ENCODE measurements at regions of chr12 and their contacts with region 1.

Region 1: GRCh38 chr12:25130741-25131188 is 64.2 kb downstream of the DNAI7 start:
- DNase-seq: peak; percentile 31
- ATAC-seq: no peak
- H3K4me3 ChIP-seq: no peak overlapping the region
- H3K27ac ChIP-seq: no peak overlapping the region
- H3K4me1 ChIP-seq: no peaks in the 10 kb centered on the region
- H3K27me3 ChIP-seq: no peaks in the 10 kb centered on the region
- CTCF ChIP-seq: no peak
- EP300 ChIP-seq: no peak
- POLR2A ChIP-seq: no peak
- RAD21 ChIP-seq: no peak

Region 2: GRCh38 chr12:24852420-24852819 is 278.3 kb before region 1 on chr12:
- CTCF ChIA-PET with region 1: no interaction called
- POLR2A ChIA-PET with region 1: no interaction called
- in situ Hi-C with region 1: no loop called
- intact Hi-C with region 1: loop called (anchors 10 kb)
- DNase-seq: no peak
- ATAC-seq: no peak
- H3K4me3 ChIP-seq: no peak overlapping the region
- H3K27ac ChIP-seq: no peak overlapping the region
- H3K4me1 ChIP-seq: no peaks in the 10 kb centered on the region
- H3K27me3 ChIP-seq: no peaks in the 10 kb centered on the region
- CTCF ChIP-seq: no peak
- EP300 ChIP-seq: no peak
- POLR2A ChIP-seq: no peak
- RAD21 ChIP-seq: no peak

Region 3: DNA sequence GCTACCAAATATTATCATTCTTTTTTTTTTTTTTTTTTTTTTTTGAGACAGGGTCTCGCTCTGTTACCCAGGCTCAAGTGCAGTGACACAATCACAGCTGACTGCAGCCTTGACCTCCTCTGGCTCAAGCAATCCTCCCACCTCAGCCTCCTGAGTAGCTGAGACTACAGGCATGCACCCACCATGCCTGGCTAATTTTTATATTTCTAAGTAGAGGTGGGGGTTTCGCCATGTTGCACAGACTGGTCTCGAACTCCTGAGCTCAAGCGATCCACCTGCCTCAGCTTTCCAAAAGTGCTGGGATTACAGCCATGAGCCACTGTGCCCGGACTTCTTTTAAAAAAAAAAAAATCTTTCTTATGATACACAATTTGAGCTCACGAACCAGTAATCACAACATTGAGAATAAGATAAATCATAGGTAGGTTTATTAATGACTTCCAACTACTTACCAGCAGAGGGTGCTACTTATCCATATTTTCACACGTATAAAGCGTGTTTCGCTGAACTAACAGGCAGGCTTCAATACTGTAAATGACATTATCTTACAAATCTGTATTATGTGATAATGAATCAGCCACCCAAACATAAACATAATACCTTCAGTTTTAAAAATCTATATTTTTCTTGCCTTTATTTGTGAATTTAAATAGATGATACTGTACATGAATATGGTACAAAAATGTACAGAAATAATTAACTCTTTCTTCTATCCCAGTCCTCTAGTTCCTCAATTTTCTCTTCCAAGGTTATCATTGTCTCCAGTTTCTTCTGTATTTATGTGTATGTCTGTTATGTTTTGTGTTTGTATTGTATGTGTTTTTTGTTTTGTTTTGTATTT is 139.3 kb before region 1 on chr12:
- CTCF ChIA-PET with region 1: interaction called, 11 read pairs
- POLR2A ChIA-PET with region 1: no interaction called
- in situ Hi-C with region 1: loop called (anchors 5 kb)
- intact Hi-C with region 1: loop called (anchors 1 kb)
- DNase-seq: peak; percentile 45
- ATAC-seq: peak; percentile 82
- H3K4me3 ChIP-seq: no peak overlapping the region
- H3K27ac ChIP-seq: no peak overlapping the region
- H3K4me1 ChIP-seq: no peaks in the 10 kb centered on the region
- H3K27me3 ChIP-seq: no peaks in the 10 kb centered on the region; a peak in 1 of 5 replicates
- CTCF ChIP-seq: peak; percentile 70
- EP300 ChIP-seq: no peak
- POLR2A ChIP-seq: no peak
- RAD21 ChIP-seq: peak; percentile 53; the same call in 1 of the 2 replicates

Region 4: GRCh38 chr12:25005376-25005775 is 125.4 kb before region 1 on chr12:
- CTCF ChIA-PET with region 1: no interaction called
- POLR2A ChIA-PET with region 1: no interaction called
- in situ Hi-C with region 1: no loop called
- intact Hi-C with region 1: no loop called
- DNase-seq: no peak
- ATAC-seq: no peak
- H3K4me3 ChIP-seq: no peak overlapping the region
- H3K27ac ChIP-seq: no peak overlapping the region
- H3K4me1 ChIP-seq: no peaks in the 10 kb centered on the region
- H3K27me3 ChIP-seq: no peaks in the 10 kb centered on the region; a peak in 1 of 5 replicates
- CTCF ChIP-seq: no peak
- EP300 ChIP-seq: no peak
- POLR2A ChIP-seq: no peak
- RAD21 ChIP-seq: no peak

Region 5: DNA sequence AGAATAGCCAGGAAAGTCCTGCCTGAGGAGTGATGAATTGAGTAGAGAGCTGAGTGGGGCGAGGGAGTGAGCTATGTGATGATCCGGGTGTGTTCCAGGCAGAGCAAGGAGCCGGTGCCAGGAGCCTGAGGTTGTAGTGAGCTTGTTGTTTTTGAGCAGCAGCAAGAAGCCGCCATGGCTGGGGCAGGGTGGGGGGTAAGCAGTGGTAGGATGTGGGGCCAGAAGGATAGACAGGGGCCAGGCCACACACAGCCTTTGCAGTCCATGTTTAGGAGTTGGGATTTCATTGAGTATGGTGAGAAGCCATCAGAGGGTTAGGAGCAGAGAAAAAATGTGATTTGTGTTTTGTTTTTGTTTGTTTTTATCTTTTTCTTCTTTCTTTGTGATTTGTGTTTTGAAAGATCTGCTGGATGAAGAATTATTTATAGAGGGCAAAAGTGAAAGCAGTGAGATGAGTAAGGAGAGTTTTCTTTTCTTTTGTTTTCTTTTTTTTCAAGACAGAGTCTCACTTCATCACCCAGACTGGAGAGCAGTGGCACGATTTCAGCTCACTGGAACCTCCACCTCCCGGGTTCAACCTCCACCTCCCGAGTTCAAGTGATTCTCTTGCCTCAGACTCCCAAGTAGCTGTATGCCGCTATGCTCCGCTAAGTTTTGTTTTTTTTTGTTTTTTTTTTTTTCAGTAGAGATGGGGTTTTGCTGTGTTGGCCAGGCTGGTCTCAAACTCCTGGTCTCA is 89.6 kb before region 1 on chr12:
- CTCF ChIA-PET with region 1: no interaction called
- POLR2A ChIA-PET with region 1: no interaction called
- in situ Hi-C with region 1: no loop called
- intact Hi-C with region 1: no loop called
- DNase-seq: no peak
- ATAC-seq: no peak
- H3K4me3 ChIP-seq: no peak overlapping the region
- H3K27ac ChIP-seq: no peak overlapping the region
- H3K4me1 ChIP-seq: no peaks in the 10 kb centered on the region
- H3K27me3 ChIP-seq: no peaks in the 10 kb centered on the region; a peak in 1 of 5 replicates
- CTCF ChIP-seq: no peak
- EP300 ChIP-seq: no peak
- POLR2A ChIP-seq: no peak
- RAD21 ChIP-seq: no peak

Region 6: DNA sequence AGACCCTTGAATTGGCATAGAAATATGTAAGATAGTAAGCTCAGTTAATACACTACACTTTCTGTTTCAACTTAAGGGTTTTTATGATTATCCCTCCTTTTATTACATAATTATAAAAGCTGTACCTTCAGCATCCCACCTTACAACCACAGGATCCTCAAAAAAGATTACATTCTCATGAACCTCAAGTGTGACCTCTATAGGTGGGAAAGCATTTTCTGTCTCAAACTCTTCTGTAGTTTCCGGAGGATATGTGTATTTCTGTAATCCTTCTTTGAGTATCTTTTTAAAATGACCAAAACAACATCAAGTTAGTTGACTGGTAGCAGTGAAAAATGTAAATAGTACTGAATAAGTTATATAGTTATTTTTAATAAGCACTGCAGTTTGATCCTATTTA is 11.7 kb before region 1 on chr12:
- CTCF ChIA-PET with region 1: no interaction called
- POLR2A ChIA-PET with region 1: no interaction called
- in situ Hi-C with region 1: no loop called
- intact Hi-C with region 1: no loop called
- DNase-seq: no peak
- ATAC-seq: no peak
- H3K4me3 ChIP-seq: no peak overlapping the region
- H3K27ac ChIP-seq: no peak overlapping the region
- H3K4me1 ChIP-seq: peaks cover 7% of the 10 kb centered on the region; the same call in 1 of the 2 replicates
- H3K27me3 ChIP-seq: no peaks in the 10 kb centered on the region
- CTCF ChIP-seq: no peak
- EP300 ChIP-seq: no peak
- POLR2A ChIP-seq: no peak
- RAD21 ChIP-seq: no peak

Region 7: DNA sequence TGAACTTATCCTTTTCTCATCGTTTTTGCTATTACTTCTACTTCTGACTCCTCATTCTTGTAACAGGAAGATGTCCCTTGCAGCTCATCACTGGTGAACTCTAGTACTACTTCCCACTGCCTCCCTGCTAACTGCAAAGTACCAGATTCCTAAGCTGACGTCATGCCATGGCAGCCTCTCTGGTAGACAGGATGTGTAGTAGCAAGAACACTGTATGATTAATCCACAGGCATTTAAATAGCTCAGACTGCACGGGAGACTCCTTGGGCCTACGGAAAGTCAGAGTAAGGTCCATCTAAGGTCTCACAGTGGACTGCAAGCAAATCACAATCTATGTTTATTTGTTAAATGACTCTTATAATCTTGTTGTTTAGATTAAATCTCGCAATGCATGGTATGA is 20.7 kb after region 1 on chr12:
- CTCF ChIA-PET with region 1: no interaction called
- POLR2A ChIA-PET with region 1: no interaction called
- in situ Hi-C with region 1: no loop called
- intact Hi-C with region 1: loop called (anchors 2 kb)
- DNase-seq: no peak
- ATAC-seq: no peak
- H3K4me3 ChIP-seq: no peak overlapping the region
- H3K27ac ChIP-seq: no peak overlapping the region
- H3K4me1 ChIP-seq: peaks cover 5% of the 10 kb centered on the region; the same call in 1 of the 2 replicates
- H3K27me3 ChIP-seq: no peaks in the 10 kb centered on the region
- CTCF ChIP-seq: no peak
- EP300 ChIP-seq: no peak
- POLR2A ChIP-seq: no peak
- RAD21 ChIP-seq: no peak

Region 8: GRCh38 chr12:25401547-25402345 is 271.0 kb after region 1 on chr12:
- CTCF ChIA-PET with region 1: no interaction called
- POLR2A ChIA-PET with region 1: no interaction called
- in situ Hi-C with region 1: no loop called
- intact Hi-C with region 1: no loop called
- DNase-seq: no peak
- ATAC-seq: no peak
- H3K4me3 ChIP-seq: no peak overlapping the region
- H3K27ac ChIP-seq: no peak overlapping the region
- H3K4me1 ChIP-seq: no peaks in the 10 kb centered on the region
- H3K27me3 ChIP-seq: no peaks in the 10 kb centered on the region
- CTCF ChIP-seq: no peak
- EP300 ChIP-seq: no peak
- POLR2A ChIP-seq: no peak
- RAD21 ChIP-seq: no peak